ENCODE measurements at regions of chr6 and their contacts with region 1.

Region 1: GRCh38 chr6:43174263-43175112 is 3.4 kb downstream of the SRF start:
- DNase-seq: peak; percentile 96
- H3K4me3 Mint-ChIP-seq: peak overlapping the region; percentile 99
- H3K27ac Mint-ChIP-seq: peak overlapping the region; percentile 64
- H3K4me1 Mint-ChIP-seq: peaks cover 40% of the 10 kb centered on the region
- H3K27me3 Mint-ChIP-seq: no peaks in the 10 kb centered on the region

Region 2: GRCh38 chr6:42782622-42783176 is 391.8 kb before region 1 on chr6:
- intact Hi-C with region 1: loop called (anchors 5 kb)
- DNase-seq: peak; percentile 61
- H3K4me3 Mint-ChIP-seq: peak overlapping the region; percentile 87
- H3K27ac Mint-ChIP-seq: peak overlapping the region; percentile 99
- H3K4me1 Mint-ChIP-seq: peaks cover 33% of the 10 kb centered on the region
- H3K27me3 Mint-ChIP-seq: no peaks in the 10 kb centered on the region

Region 3: GRCh38 chr6:42984001-42984923 is 190.2 kb before region 1 on chr6 and contains the start of gene PPP2R5D:
- intact Hi-C with region 1: loop called (anchors 2 kb)
- DNase-seq: peak; percentile 98
- H3K4me3 Mint-ChIP-seq: peak within 1 kb of the TSS; percentile 95
- H3K27ac Mint-ChIP-seq: peak within 1 kb of the TSS; percentile 87
- H3K4me1 Mint-ChIP-seq: peaks cover 46% of the 10 kb centered on the region
- H3K27me3 Mint-ChIP-seq: no peaks in the 10 kb centered on the region
- total RNA-seq, gene PPP2R5D: 62.7 and 63.2 TPM in 2 replicates

Region 4: DNA sequence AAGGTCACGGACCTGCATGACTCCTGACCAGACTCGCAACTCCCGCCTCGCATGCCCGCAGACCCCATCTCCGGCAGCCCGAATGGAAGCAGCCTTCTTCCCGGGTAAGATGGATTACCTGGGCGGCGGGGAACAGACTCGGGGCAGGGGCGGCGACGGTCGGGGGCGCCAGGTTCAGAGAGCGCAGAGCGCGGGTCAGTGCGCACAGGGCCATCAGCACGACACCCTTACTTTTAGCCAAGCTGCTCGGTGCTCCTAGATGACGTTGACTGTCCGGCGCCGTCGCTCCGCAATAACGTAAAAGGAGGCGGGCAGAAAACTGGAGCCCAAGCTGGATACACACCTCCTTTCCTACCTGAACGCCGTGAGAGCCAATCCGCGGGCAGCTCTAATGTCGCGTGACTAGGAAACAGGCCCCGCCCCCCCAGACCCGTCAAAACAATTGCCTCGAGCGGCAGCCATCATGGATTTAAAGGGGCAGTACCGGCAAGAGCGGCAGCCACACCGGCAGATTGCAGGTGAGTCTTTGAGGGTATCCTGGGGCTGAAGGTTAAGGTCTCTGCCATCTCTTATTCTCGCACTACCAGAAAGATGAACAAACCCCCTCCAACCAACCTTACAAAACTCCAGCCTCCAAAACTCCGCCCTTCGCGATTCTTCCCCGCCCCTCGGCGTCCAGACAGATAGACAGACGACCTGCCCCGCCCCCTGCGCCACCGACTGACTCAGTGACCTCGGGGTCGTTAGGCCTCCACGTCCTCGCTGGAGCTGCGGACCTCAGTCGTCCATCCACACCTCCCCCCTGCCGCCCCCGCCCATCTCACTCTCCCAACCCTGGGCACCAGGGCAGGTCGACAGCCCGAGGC is 115.1 kb before region 1 on chr6 and contains the starts of genes KLC4 and MRPL2:
- intact Hi-C with region 1: loop called (anchors 2 kb)
- DNase-seq: peak; percentile 96
- H3K4me3 Mint-ChIP-seq: peak within 1 kb of the TSS; percentile 93
- H3K27ac Mint-ChIP-seq: peak within 1 kb of the TSS; percentile 98
- H3K4me1 Mint-ChIP-seq: peaks cover 28% of the 10 kb centered on the region
- H3K27me3 Mint-ChIP-seq: no peaks in the 10 kb centered on the region
- total RNA-seq, gene KLC4: 11.7 and 14.1 TPM in 2 replicates
- total RNA-seq, gene MRPL2: 76.0 and 76.6 TPM in 2 replicates

Region 5: DNA sequence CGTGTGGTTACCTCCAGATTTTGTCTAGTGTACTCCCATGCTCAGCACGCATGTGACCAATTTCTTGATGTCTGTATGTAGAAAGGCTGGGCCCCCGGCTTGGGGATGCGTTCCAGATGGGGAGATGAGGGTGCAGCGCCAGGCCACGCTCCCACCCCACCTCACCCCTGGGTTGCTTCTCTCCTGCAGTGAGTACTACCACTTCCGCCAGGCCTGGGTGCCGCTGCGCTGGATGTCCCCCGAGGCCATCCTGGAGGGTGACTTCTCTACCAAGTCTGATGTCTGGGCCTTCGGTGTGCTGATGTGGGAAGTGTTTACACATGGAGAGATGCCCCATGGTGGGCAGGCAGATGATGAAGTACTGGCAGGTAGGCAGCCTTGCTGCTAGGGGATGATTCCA is 14.9 kb before region 1 on chr6:
- intact Hi-C with region 1: no loop called
- DNase-seq: no peak
- H3K4me3 Mint-ChIP-seq: no peak overlapping the region
- H3K27ac Mint-ChIP-seq: no peak overlapping the region
- H3K4me1 Mint-ChIP-seq: no peaks in the 10 kb centered on the region
- H3K27me3 Mint-ChIP-seq: no peaks in the 10 kb centered on the region

Region 6: GRCh38 chr6:43247113-43247999 is 72.9 kb after region 1 on chr6:
- intact Hi-C with region 1: loop called (anchors 2 kb)
- DNase-seq: peak; percentile 73
- H3K4me3 Mint-ChIP-seq: peak overlapping the region; percentile 77
- H3K27ac Mint-ChIP-seq: peak overlapping the region; percentile 77
- H3K4me1 Mint-ChIP-seq: peaks cover 26% of the 10 kb centered on the region
- H3K27me3 Mint-ChIP-seq: peaks cover 19% of the 10 kb centered on the region

Region 7: DNA sequence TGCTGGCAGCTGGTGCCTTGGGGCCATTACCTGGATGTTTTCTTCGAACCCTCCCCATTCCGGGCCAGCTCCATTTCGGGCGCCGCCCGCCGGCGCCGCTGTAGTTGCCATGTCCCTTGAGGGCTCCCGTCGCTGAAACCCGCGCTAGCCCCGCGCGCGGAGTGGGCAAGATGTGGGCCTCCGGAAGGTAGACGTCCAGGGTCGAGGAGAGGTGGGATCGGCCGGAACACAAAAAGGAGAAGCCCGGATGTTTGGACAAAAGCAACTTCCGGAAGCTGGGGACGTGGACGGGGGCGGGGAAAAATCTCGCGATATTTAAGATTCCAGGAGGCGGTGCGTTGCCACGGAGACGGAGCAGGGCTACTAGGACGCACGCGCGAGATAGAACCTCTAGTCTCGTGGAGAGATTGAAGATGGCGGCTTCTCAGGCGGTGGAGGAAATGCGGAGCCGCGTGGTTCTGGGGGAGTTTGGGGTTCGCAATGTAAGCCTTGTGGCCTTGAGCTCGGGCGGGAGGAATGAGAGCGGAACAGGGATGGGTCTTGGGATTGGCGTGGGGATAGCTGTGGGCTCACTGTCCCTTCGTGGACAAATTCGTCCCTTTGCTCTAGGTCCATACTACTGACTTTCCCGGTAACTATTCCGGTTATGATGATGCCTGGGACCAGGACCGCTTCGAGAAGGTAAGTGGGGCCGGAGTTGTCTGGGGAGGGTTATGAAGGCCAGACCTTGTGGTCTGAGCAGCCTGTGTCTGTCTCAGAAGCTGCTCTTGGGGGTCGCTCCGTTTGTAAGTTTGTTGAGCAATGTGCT is 342.4 kb after region 1 on chr6 and contains the starts of genes POLR1C and YIPF3:
- intact Hi-C with region 1: loop called (anchors 5 kb)
- DNase-seq: peak; percentile 94
- H3K4me3 Mint-ChIP-seq: no peak within 1 kb of the TSS
- H3K27ac Mint-ChIP-seq: no peak within 1 kb of the TSS
- H3K4me1 Mint-ChIP-seq: peaks cover 18% of the 10 kb centered on the region
- H3K27me3 Mint-ChIP-seq: no peaks in the 10 kb centered on the region
- total RNA-seq, gene POLR1C: 60.8 and 63.8 TPM in 2 replicates
- total RNA-seq, gene YIPF3: 51.7 and 59.0 TPM in 2 replicates